H1 (cell line): ENCODE measurements at regions of chr20 and their contacts with region 1.

Region 1: GRCh38 chr20:62121776-62122631 is at the start of gene LSM14B:
- DNase-seq: peak; percentile 75 to 92
- H3K4me3 ChIP-seq: peak within 1 kb of the TSS; percentile 65 to 98 (median 78)
- H3K27ac ChIP-seq: peak within 1 kb of the TSS; percentile 82; the same call in 1 of the 2 replicates
- H3K4me1 ChIP-seq: peaks cover 4 to 19% (median 7%) of the 10 kb centered on the region in 4 experiments
- H3K27me3 ChIP-seq: no peaks in the 10 kb centered on the region; a peak in 1 of 7 replicates
- CTCF ChIP-seq: no peak
- EP300 ChIP-seq: peak in 1 of 2 experiments; percentile 29; a peak in 1 of 3 replicates
- POLR2A ChIP-seq: peak in 1 of 2 experiments; percentile 60; a peak in 1 of 3 replicates
- RAD21 ChIP-seq: no peak; a peak in 1 of 4 replicates
- total RNA-seq, gene LSM14B: 65.6 and 70.0 TPM in 2 replicates

Region 2: DNA sequence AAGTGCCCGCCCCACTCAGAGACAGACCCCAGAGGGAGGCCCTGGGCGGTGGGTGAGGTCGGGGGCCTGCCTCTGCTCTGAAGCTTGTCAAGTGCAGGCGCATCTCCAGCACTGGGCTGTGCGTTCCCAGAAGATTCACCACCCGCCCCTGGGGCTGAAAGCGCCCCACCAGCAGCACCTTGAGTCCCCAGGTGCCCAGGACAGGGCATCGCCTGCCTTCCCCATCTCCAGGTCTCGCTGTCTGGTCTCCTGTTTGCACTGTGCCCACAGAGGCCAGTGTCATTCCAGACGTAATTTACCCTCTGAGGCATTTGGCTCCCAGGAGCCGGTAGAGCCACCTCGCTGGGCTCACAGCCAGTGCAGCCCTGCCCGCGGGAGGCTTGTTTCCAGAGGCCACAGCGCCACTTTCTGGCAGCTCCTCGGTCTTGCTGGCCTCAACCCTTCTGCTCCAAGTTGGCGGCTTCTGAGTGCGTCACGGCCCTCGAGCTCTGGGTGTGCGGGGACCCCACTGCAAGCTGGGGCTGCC is 247.4 kb before region 1 on chr20:
- CTCF ChIA-PET with region 1: no interaction called
- POLR2A ChIA-PET with region 1: no interaction called
- DNase-seq: peak; percentile 36 to 77
- H3K4me3 ChIP-seq: no peak overlapping the region
- H3K27ac ChIP-seq: no peak overlapping the region
- H3K4me1 ChIP-seq: no peaks in the 10 kb centered on the region
- H3K27me3 ChIP-seq: no peaks in the 10 kb centered on the region; a peak in 2 of 7 replicates
- CTCF ChIP-seq: peak; percentile 85 to 94 (median 88)
- EP300 ChIP-seq: no peak
- POLR2A ChIP-seq: no peak
- RAD21 ChIP-seq: peak; percentile 93 to 94

Region 3: GRCh38 chr20:62136283-62137091 is 14.5 kb after region 1 on chr20:
- CTCF ChIA-PET with region 1: interaction called, 57 read pairs
- POLR2A ChIA-PET with region 1: interaction called, 62 read pairs
- DNase-seq: no peak
- H3K4me3 ChIP-seq: no peak overlapping the region
- H3K27ac ChIP-seq: no peak overlapping the region
- H3K4me1 ChIP-seq: peaks cover 0 to 1% (median 0%) of the 10 kb centered on the region in 4 experiments; a peak in 2 of 7 replicates
- H3K27me3 ChIP-seq: no peaks in the 10 kb centered on the region
- CTCF ChIP-seq: peak; percentile 76 to 90 (median 79)
- EP300 ChIP-seq: no peak
- POLR2A ChIP-seq: peak in 1 of 2 experiments; percentile 47; a peak in 1 of 3 replicates
- RAD21 ChIP-seq: peak; percentile 68 to 74

Region 4: GRCh38 chr20:62143118-62143973 is 21.3 kb after region 1 on chr20 and contains the starts of genes PSMA7 and SS18L1:
- CTCF ChIA-PET with region 1: interaction called, 57 read pairs
- POLR2A ChIA-PET with region 1: interaction called, 62 read pairs
- DNase-seq: peak in 1 of 2 experiments; percentile 87
- H3K4me3 ChIP-seq: peak within 1 kb of the TSS; percentile 63 to 81 (median 67)
- H3K27ac ChIP-seq: peak within 1 kb of the TSS; percentile 95; the same call in 1 of the 2 replicates
- H3K4me1 ChIP-seq: peaks cover 0 to 12% (median 4%) of the 10 kb centered on the region in 4 experiments; a peak in 6 of 7 replicates
- H3K27me3 ChIP-seq: no peaks in the 10 kb centered on the region
- CTCF ChIP-seq: no peak
- EP300 ChIP-seq: peak in 1 of 2 experiments; percentile 85; a peak in 1 of 3 replicates
- POLR2A ChIP-seq: peak in 1 of 2 experiments; percentile 70; a peak in 1 of 3 replicates
- RAD21 ChIP-seq: no peak
- total RNA-seq, gene PSMA7: 339 and 361 TPM in 2 replicates
- total RNA-seq, gene SS18L1: 22.4 and 28.4 TPM in 2 replicates